MCF 10A (cell line): ENCODE measurements at regions of chr5 and their contacts with region 1.

Region 1: GRCh38 chr5:74640450-74640953 is at the start of gene ENC1:
- DNase-seq: peak; percentile 87
- H3K4me3 Mint-ChIP-seq: peak within 1 kb of the TSS; percentile 87
- H3K27ac Mint-ChIP-seq: peak within 1 kb of the TSS; percentile 90
- H3K4me1 Mint-ChIP-seq: peaks cover 48% of the 10 kb centered on the region
- H3K27me3 Mint-ChIP-seq: no peaks in the 10 kb centered on the region
- CTCF ChIP-seq: peak; percentile 42
- total RNA-seq, gene ENC1: 10.7 and 12.9 TPM in 2 replicates

Region 2: GRCh38 chr5:73902327-73903051 is 738.0 kb before region 1 on chr5:
- CTCF ChIA-PET with region 1: interaction called, 102 read pairs
- POLR2A ChIA-PET with region 1: interaction called, 34 read pairs
- intact Hi-C with region 1: loop called (anchors 1 kb)
- DNase-seq: peak; percentile 75
- H3K4me3 Mint-ChIP-seq: no peak overlapping the region
- H3K27ac Mint-ChIP-seq: peak overlapping the region; percentile 74
- H3K4me1 Mint-ChIP-seq: peaks cover 15% of the 10 kb centered on the region
- H3K27me3 Mint-ChIP-seq: no peaks in the 10 kb centered on the region
- CTCF ChIP-seq: peak; percentile 59

Region 3: DNA sequence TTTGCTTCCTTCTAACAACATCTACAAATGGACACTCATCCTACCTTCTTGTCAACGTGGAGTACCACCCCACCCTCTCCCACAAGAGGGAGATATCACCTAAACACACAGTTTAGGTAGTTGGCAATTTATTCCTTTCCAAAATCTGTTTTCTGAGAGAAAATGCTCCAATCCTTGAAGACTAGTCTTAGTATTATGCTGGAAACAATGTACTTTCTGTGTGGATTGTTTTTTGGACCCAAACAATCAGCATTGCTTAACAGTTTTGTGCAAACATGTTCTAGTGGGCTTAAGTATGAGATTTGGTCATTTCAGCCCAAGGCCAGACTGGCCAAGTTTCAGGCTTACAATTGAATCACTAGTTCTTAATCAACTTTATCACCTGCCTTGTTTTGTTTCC is 655.4 kb before region 1 on chr5:
- CTCF ChIA-PET with region 1: interaction called, 7 read pairs
- POLR2A ChIA-PET with region 1: no interaction called
- intact Hi-C with region 1: loop called (anchors 1 kb)
- DNase-seq: peak; percentile 43
- H3K4me3 Mint-ChIP-seq: no peak overlapping the region
- H3K27ac Mint-ChIP-seq: peak overlapping the region; percentile 55
- H3K4me1 Mint-ChIP-seq: peaks cover 6% of the 10 kb centered on the region
- H3K27me3 Mint-ChIP-seq: no peaks in the 10 kb centered on the region
- CTCF ChIP-seq: no peak

Region 4: DNA sequence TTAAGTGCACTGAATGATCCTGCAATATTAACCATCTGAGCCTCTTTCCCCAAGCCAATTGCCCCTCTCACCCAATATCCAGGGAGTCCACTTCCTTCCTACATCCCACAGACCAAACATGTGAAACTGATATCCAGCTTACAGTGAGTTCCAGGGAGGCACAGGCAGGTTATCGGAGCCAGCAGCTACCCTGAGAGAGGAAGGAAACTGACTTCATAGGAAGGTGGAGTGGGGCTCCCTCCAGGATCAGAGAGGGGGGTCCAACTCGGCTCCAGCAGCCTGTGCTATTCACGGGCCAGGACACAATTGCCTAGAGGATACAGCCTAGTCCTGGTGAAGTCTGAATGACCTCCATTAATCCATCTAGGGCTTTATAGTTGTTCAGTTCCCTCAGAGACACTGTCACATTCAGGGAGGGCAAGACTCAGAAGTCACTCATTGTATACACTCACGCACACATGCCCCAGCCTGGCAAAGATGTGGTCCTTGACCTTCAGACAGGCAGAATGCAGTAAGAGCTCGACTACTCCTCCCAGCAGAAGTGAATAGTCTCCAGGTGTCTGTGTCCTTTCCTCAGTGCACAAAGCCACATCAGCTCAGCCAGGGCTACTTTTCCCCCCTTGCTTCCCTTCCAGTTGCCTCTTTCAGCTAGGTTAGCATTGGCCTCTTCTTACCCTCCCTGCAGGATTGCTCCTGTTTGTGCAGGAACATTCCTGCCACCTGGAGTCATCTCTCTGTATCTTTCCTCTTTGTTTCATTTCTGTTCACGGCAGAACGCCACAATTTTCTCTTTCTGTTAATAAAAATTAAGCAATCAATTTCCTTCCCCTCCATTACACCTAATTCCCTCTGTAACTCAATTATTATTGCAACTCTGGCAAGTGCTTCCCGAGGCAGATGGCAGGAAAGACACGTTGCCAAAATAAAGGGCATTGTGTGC is 512.9 kb before region 1 on chr5:
- CTCF ChIA-PET with region 1: interaction called, 6 read pairs
- POLR2A ChIA-PET with region 1: interaction called, 5 read pairs
- intact Hi-C with region 1: loop called (anchors 10 kb)
- DNase-seq: peak; percentile 40
- H3K4me3 Mint-ChIP-seq: peak overlapping the region; percentile 30
- H3K27ac Mint-ChIP-seq: no peak overlapping the region
- H3K4me1 Mint-ChIP-seq: peaks cover 7% of the 10 kb centered on the region
- H3K27me3 Mint-ChIP-seq: no peaks in the 10 kb centered on the region
- CTCF ChIP-seq: peak; percentile 21

Region 5: DNA sequence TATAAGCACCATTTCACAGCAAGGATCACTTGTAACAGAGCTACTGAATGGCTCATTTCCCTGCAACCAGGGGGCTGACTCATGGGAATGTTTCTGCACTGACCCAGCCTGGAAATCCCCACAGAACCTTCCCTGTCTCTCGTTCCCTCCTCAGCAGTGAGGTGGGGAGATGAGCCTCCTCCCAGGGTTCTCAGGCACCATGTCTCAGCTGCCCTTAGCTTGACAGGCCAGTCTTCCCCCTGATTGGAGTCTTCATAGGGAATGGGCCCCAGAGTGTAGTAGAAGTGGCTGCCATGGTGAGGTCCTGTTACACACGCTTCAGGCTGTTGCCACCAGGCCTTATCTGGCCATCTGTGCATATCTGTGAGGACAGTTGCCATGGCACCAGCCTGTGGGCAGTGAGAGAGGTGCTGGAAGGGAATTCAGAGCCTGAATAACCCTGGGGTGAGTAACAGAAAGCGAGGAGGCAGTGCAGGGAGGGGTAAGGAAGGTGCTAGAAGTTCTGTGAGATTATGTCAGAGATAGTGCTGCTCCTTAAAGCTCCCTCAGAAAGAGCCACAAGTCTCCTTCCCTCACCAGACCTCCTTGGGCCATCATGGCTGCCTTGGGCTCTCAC is 324.3 kb before region 1 on chr5:
- CTCF ChIA-PET with region 1: interaction called, 9 read pairs
- POLR2A ChIA-PET with region 1: interaction called, 9 read pairs
- intact Hi-C with region 1: loop called (anchors 2 kb)
- DNase-seq: peak; percentile 88
- H3K4me3 Mint-ChIP-seq: no peak overlapping the region
- H3K27ac Mint-ChIP-seq: peak overlapping the region; percentile 97
- H3K4me1 Mint-ChIP-seq: peaks cover 35% of the 10 kb centered on the region
- H3K27me3 Mint-ChIP-seq: no peaks in the 10 kb centered on the region
- CTCF ChIP-seq: no peak

Region 6: DNA sequence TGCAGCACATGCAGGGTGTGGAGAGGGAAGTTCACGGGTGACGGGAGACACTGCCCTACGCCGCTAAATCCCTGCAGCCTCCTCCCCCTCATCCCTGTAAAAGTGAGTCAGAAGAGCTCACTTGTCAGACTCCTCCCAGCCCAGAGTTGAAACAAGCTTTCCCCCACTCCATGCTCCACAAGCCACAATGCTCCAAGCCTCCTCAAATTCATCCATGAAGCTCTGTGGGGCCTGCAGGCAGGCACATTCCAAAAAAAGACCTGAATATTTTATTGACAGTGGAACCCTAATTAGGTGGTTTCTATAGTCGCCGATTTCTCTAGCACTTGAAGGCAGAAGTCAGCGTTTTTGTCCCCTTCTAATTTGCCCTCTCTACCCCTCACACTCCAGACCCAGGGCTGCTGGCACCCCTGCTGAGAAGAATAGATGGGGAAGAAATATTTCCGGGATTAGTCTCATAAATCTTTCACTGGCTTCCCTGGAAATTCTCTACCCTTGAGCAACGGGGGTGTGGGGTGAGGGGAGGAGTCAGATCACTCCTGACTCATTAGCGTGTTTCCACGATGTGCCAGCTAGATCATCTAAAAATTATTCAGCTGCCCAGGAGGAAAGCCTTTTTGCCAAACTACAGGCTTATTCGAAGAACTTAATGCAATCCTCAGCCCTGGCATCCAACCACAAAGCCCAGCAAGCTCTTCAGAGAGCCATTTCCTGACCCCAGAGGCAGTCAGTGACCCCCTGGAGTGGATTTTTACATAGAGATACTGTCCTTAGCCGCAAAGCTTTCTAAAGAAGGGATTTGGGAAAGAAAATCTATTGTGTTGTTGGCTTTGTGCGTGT is 97.1 kb before region 1 on chr5:
- CTCF ChIA-PET with region 1: interaction called, 4 read pairs
- POLR2A ChIA-PET with region 1: interaction called, 16 read pairs
- intact Hi-C with region 1: loop called (anchors 1 kb)
- DNase-seq: peak; percentile 91
- H3K4me3 Mint-ChIP-seq: peak overlapping the region; percentile 58
- H3K27ac Mint-ChIP-seq: peak overlapping the region; percentile 84
- H3K4me1 Mint-ChIP-seq: peaks cover 17% of the 10 kb centered on the region
- H3K27me3 Mint-ChIP-seq: no peaks in the 10 kb centered on the region
- CTCF ChIP-seq: no peak

Region 7: GRCh38 chr5:74673011-74673790 is 32.7 kb after region 1 on chr5:
- CTCF ChIA-PET with region 1: no interaction called
- POLR2A ChIA-PET with region 1: no interaction called
- intact Hi-C with region 1: no loop called
- DNase-seq: peak; percentile 54
- H3K4me3 Mint-ChIP-seq: no peak overlapping the region
- H3K27ac Mint-ChIP-seq: no peak overlapping the region
- H3K4me1 Mint-ChIP-seq: peaks cover 13% of the 10 kb centered on the region
- H3K27me3 Mint-ChIP-seq: no peaks in the 10 kb centered on the region
- CTCF ChIP-seq: peak; percentile 64